Spleen (tissue), 13 donors: ENCODE measurements at regions of chr2 and their contacts with region 1.

Region 1: GRCh38 chr2:229849073-229849472 is 72.7 kb downstream of the TRIP12 start:
- DNase-seq: no peak
- H3K4me3 ChIP-seq: no peak overlapping the region
- H3K27ac ChIP-seq: peak overlapping the region in 1 of 8 donors; percentile 28
- H3K4me1 ChIP-seq: peaks cover 8 to 85% (median 42%) of the 10 kb centered on the region in 6 donors
- H3K27me3 ChIP-seq: no peaks in the 10 kb centered on the region
- CTCF ChIP-seq: no peak
- POLR2A ChIP-seq: no peak

Region 2: GRCh38 chr2:229748950-229749349 is 100.1 kb before region 1 on chr2:
- intact Hi-C with region 1: no loop called
- DNase-seq: no peak
- H3K4me3 ChIP-seq: no peak overlapping the region
- H3K27ac ChIP-seq: no peak overlapping the region
- H3K4me1 ChIP-seq: no peaks in the 10 kb centered on the region
- H3K27me3 ChIP-seq: no peaks in the 10 kb centered on the region
- CTCF ChIP-seq: no peak
- POLR2A ChIP-seq: no peak

Region 3: GRCh38 chr2:229901819-229902218 is 52.7 kb after region 1 on chr2:
- intact Hi-C with region 1: loop called (anchors 10 kb)
- DNase-seq: no peak
- H3K4me3 ChIP-seq: no peak overlapping the region
- H3K27ac ChIP-seq: no peak overlapping the region
- H3K4me1 ChIP-seq: peaks cover 0 to 85% (median 39%) of the 10 kb centered on the region in 6 donors
- H3K27me3 ChIP-seq: no peaks in the 10 kb centered on the region
- CTCF ChIP-seq: no peak
- POLR2A ChIP-seq: no peak